ENCODE measurements at regions of chr18 and their contacts with region 1.

Region 1: DNA sequence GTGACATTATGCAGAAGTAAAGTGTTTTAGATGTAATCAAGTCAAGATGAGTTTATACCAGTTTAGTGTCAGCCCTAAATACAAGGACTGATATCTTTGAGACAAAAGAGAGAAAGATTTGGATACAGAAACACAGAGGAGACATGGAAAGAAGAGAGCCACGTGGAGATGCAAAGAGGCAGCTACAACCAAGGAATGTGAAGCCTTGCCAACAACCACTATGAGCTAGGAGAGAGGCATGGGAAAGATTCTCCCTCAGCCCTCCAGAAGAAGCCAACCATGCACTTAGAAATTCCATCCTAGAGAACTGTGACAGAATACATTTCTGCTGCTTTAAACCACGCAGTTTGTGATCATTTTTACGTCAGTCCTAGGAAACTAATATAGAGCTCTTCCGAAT is 217.2 kb downstream of the DOK6 start:
- DNase-seq: no peak
- ATAC-seq: no peak
- H3K4me3 ChIP-seq: no peak overlapping the region
- H3K27ac ChIP-seq: no peak overlapping the region
- H3K4me1 ChIP-seq: no peaks in the 10 kb centered on the region
- H3K27me3 ChIP-seq: no peaks in the 10 kb centered on the region

Region 2: GRCh38 chr18:68925268-68925667 is 692.6 kb before region 1 on chr18:
- intact Hi-C with region 1: no loop called
- DNase-seq: no peak
- ATAC-seq: no peak
- H3K4me3 ChIP-seq: no peak overlapping the region
- H3K27ac ChIP-seq: no peak overlapping the region
- H3K4me1 ChIP-seq: no peaks in the 10 kb centered on the region
- H3K27me3 ChIP-seq: no peaks in the 10 kb centered on the region

Region 3: DNA sequence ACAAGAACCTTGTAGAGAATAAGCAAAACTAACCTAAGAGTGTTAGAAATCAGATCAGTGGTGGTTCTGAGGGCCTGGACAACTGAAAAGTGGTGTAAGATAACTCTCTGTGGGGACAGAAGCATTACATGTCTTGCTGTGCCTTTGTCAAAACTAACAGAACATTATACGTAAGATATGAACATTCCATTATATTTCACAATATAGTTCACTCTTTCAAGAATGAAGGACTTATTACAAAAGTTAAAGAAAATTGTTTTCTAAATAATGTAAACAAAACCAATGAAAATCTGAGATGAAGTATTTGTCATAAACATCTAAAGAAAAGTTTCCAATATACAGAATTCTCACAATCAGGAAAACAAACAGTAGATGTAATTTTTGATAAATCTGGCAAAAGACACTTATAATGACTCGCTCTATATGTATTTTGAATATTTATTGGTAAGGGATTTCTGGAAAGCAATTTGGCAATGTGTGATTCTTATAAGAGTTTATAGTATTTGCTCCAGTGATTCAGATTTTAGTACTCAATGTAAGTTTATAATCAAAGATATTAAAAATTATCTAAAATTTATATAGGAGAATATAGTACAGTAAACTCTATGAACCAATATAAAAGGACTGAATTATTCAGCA is 71.4 kb after region 1 on chr18:
- intact Hi-C with region 1: no loop called
- DNase-seq: no peak
- ATAC-seq: no peak
- H3K4me3 ChIP-seq: no peak overlapping the region
- H3K27ac ChIP-seq: no peak overlapping the region
- H3K4me1 ChIP-seq: peaks cover 0 to 1% of the 10 kb centered on the region in 2 donors
- H3K27me3 ChIP-seq: no peaks in the 10 kb centered on the region

Region 4: GRCh38 chr18:70107091-70107490 is 489.2 kb after region 1 on chr18:
- intact Hi-C with region 1: loop called in 1 of 2 experiments (anchors 5 kb)
- DNase-seq: no peak
- ATAC-seq: no peak
- H3K4me3 ChIP-seq: no peak overlapping the region
- H3K27ac ChIP-seq: no peak overlapping the region
- H3K4me1 ChIP-seq: no peaks in the 10 kb centered on the region
- H3K27me3 ChIP-seq: no peaks in the 10 kb centered on the region